ENCODE measurements at regions of chr20 and their contacts with region 1.

Region 1: DNA sequence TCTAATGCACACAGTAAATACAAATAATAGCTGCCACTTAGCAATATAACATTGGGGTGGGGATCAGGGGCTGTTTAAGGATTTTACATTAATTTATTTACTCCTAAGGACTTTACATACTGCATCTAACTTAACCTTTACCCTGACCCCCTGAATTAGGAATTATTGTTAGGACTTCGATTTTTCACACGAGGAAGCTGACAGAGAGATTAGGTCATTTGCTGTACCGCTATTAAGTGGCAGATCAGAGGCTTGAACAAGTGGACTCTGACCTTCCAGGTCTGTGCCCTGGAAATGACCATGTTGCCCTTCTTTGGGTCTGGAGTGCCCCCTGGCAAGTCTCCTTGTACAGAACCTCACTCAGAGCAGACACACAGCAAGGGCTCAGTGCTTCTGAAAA is 5.2 kb upstream of the ELMO2 start:
- DNase-seq: no peak
- H3K4me3 ChIP-seq: no peak overlapping the region
- H3K27ac ChIP-seq: no peak overlapping the region
- H3K4me1 ChIP-seq: peaks cover 14% of the 10 kb centered on the region
- CTCF ChIP-seq: no peak

Region 2: GRCh38 chr20:46307139-46307998 is 104.3 kb before region 1 on chr20:
- CTCF ChIA-PET with region 1: no interaction called
- POLR2A ChIA-PET with region 1: no interaction called
- intact Hi-C with region 1: loop called (anchors 1 kb)
- DNase-seq: peak; percentile 62
- H3K4me3 ChIP-seq: no peak overlapping the region
- H3K27ac ChIP-seq: no peak overlapping the region
- H3K4me1 ChIP-seq: no peaks in the 10 kb centered on the region
- CTCF ChIP-seq: peak; percentile 81

Region 3: GRCh38 chr20:46772901-46773300 is 361.3 kb after region 1 on chr20:
- CTCF ChIA-PET with region 1: no interaction called
- POLR2A ChIA-PET with region 1: no interaction called
- intact Hi-C with region 1: no loop called
- DNase-seq: no peak
- H3K4me3 ChIP-seq: no peak overlapping the region
- H3K27ac ChIP-seq: peak overlapping the region; percentile 74
- H3K4me1 ChIP-seq: peaks cover 44% of the 10 kb centered on the region
- CTCF ChIP-seq: no peak

Measured in OCI-LY7 (cell line).